Right ventricle myocardium superior (tissue), 1 donor: ENCODE measurements at regions of chr17 and their contacts with region 1.

Region 1: GRCh38 chr17:59004338-59005111 is 102.2 kb downstream of the TRIM37 start:
- DNase-seq: no peak
- ATAC-seq: peak; percentile 85

Region 2: DNA sequence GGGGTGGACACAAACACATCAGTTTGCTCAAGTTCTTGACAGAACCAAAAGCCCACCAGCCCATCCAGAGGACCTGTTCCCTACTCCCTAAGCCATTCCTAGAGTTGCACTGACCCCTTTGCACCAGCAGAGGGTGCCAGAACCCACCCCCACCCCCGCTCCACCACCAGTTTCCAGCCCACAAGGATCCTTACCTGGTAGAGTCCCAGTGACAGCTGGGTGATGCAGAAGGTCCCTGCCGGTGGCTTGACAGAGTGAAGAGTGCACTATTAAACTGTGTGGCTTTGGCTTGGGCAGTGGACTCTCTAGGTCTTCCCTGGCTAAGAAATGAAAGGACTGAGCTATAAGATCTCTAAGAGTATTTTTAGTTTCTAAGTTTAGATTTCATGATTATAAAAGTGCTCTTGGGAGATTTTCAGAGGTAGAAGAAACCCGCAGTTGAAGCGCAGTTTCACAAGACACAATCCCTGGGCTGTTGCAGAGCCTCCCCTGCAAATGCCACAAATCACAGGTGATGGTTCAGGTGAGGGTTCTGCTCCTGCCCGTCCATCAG is 416.7 kb before region 1 on chr17:
- intact Hi-C with region 1: loop called (anchors 10 kb)
- DNase-seq: peak; percentile 48
- ATAC-seq: peak; percentile 82

Region 3: DNA sequence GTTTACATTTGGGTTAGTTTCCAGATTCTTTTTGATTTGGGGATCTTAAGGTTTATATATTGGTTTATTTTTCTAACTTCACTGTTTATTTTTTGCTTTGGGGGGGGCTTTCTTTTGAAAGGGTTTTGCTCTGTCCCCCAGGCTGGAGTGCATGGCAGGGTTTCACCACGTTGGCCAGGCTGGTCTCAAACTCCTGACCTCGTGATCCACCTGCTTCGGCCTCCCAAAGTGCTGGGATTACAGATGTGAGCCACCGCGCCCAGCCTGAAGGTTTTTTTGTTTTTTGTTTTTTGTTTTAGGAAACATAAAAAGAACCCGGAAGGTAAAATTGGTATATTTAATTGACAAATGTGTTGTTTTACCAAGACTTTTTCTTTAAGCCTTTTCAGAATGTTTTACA is 295.9 kb before region 1 on chr17:
- intact Hi-C with region 1: loop called (anchors 2 kb)
- DNase-seq: no peak
- ATAC-seq: no peak

Region 4: GRCh38 chr17:59067756-59068155 is 63.2 kb after region 1 on chr17:
- intact Hi-C with region 1: no loop called
- DNase-seq: no peak
- ATAC-seq: no peak

Region 5: GRCh38 chr17:59361370-59361769 is 356.8 kb after region 1 on chr17:
- intact Hi-C with region 1: no loop called
- DNase-seq: no peak
- ATAC-seq: no peak